ENCODE measurements at regions of chr17 and their contacts with region 1.

Region 1: GRCh38 chr17:76458580-76459490 is 5.9 kb upstream of the UBE2O start:
- DNase-seq: peak; percentile 56
- ATAC-seq: peak; percentile 71 to 90

Region 2: GRCh38 chr17:76408052-76408849 is 50.6 kb before region 1 on chr17:
- intact Hi-C with region 1: loop called (anchors 2 to 5 kb)
- DNase-seq: peak; percentile 64
- ATAC-seq: no peak

Region 3: GRCh38 chr17:76414334-76415295 is 44.2 kb before region 1 on chr17:
- intact Hi-C with region 1: loop called (anchors 2 to 5 kb)
- DNase-seq: peak; percentile 84
- ATAC-seq: peak; percentile 87 to 95

Region 4: GRCh38 chr17:76671123-76671911 is 212.5 kb after region 1 on chr17:
- intact Hi-C with region 1: no loop called
- DNase-seq: peak; percentile 100
- ATAC-seq: peak; percentile 99

Measured in left cardiac atrium (tissue), 4 donors.